Activated T-helper 2 cell treated with anti-CD3 and anti-CD28 coated beads, Interferon-gamma antibody, Interleukin-2, Interleukin-4, amounts not matched to agents 10 μg/mL and 5 μg/mL and 100 μg/mL, durations not matched to agents 14 hours and 24 hours and 36 hours (primary cell): ENCODE measurements at regions of chr12 and their contacts with region 1.

Region 1: GRCh38 chr12:54294152-54294952 is 6.5 kb downstream of the NFE2 start:
- DNase-seq: peak; percentile 55
- H3K4me3 Mint-ChIP-seq: no peak overlapping the region
- H3K27ac Mint-ChIP-seq: no peak overlapping the region
- H3K4me1 Mint-ChIP-seq: peaks cover 4% of the 10 kb centered on the region
- H3K27me3 Mint-ChIP-seq: peaks cover 18% of the 10 kb centered on the region

Region 2: DNA sequence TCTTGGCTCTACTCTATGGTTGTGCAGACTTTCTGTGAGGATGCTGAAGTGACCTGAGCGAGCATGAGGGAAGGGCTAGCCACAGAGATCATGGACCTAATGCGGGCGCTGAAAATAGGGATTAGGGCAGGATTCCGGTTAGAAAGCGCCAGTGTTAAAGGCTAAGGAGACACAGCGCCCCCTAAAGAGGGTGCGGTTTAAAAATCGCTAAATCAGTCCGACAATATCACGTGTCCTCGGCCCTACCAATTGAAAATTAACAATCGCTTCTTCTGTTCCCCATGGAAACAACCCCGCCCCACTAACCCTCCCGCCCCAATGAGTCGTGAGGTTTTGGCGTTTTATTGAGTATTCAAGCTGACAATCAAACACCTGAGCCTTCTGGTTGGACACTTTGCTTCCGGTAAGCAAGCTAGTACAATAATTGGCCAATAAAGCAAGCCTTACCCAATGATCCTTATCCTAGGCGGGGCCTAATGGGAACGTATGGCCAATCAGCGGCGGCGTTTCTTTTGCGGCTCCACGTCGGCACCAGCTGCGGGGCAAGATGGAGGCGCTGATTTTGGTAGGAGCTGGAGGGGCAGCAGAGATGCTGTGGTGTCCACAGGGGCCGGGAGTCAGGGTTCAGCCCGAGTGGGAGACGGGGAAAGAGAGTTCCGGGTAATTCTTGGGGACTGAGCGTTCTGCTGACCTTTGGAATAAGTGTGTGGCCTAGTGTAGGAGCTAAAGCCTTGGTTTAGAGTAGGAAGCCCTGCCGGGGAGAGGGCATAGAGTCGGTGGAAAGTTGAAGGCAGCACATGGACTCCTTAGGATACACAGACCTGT is 30.5 kb after region 1 on chr12 and contains the start of gene COPZ1:
- intact Hi-C with region 1: loop called (anchors 2 kb)
- DNase-seq: peak; percentile 92
- H3K4me3 Mint-ChIP-seq: peak within 1 kb of the TSS; percentile 100
- H3K27ac Mint-ChIP-seq: peak within 1 kb of the TSS; percentile 97
- H3K4me1 Mint-ChIP-seq: peaks cover 21% of the 10 kb centered on the region
- H3K27me3 Mint-ChIP-seq: no peaks in the 10 kb centered on the region
- total RNA-seq, gene COPZ1: 108 and 109 TPM in 2 replicates

Region 3: GRCh38 chr12:54337280-54337842 is 43.0 kb after region 1 on chr12:
- intact Hi-C with region 1: loop called (anchors 5 kb)
- DNase-seq: no peak
- H3K4me3 Mint-ChIP-seq: no peak overlapping the region
- H3K27ac Mint-ChIP-seq: no peak overlapping the region
- H3K4me1 Mint-ChIP-seq: peaks cover 8% of the 10 kb centered on the region
- H3K27me3 Mint-ChIP-seq: no peaks in the 10 kb centered on the region

Region 4: GRCh38 chr12:54373649-54374561 is 79.6 kb after region 1 on chr12:
- intact Hi-C with region 1: no loop called
- DNase-seq: no peak
- H3K4me3 Mint-ChIP-seq: no peak overlapping the region
- H3K27ac Mint-ChIP-seq: peak overlapping the region; percentile 38
- H3K4me1 Mint-ChIP-seq: peaks cover 12% of the 10 kb centered on the region
- H3K27me3 Mint-ChIP-seq: peaks cover 12% of the 10 kb centered on the region